Activated naive CD4-positive, alpha-beta T cell treated with anti-CD3 and anti-CD28 coated beads for 36 hours (primary cell): ENCODE measurements at regions of chr11 and their contacts with region 1.

Region 1: DNA sequence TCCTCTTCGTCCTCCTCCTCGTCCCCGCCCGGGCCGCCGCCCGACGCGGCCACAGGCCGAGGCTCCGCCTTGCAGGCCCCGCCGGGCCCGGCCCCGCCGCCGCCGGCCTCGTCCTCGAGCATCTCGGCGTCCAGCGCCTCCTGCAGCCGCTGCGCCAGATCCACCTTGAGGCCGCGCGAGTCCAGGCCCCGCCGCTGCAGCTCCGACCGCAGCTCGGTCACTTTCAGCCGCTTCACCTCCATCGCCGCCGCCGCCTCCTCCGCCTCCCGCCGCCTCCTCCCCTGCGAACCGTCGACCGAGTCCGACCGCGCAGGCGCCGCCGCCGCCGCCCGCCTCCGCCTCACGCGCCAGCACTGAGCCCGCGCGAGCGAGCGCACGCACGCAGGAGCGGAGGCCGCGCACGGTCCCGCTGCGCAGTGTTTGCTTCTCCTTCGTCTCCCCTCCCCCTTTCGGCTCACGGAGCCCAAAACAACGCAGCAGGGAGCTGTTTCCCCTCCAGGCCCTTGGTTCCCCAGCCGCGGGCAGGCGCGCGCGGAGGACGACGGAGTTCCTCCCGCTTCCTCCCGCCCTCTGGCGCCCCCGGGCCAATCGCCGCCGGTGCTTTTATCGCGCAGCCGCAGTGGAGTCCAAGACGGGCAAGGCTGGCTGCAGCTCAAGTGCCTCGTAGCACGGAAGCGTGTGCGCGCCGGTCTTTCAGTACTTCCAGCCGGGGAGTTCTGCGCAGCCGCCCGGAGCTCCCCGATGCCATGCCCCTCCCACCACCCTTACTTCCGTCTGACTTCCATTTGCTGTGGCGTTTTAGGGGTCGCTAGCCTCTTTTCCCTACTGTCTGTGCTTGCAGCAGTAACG is at the start of gene HNRNPUL2:
- DNase-seq: peak; percentile 99
- H3K4me3 Mint-ChIP-seq: peak within 1 kb of the TSS; percentile 90
- H3K27ac Mint-ChIP-seq: peak within 1 kb of the TSS; percentile 99
- H3K4me1 Mint-ChIP-seq: peaks cover 46% of the 10 kb centered on the region
- H3K27me3 Mint-ChIP-seq: no peaks in the 10 kb centered on the region
- total RNA-seq, gene HNRNPUL2: 58.6 to 61.5 TPM

Region 2: DNA sequence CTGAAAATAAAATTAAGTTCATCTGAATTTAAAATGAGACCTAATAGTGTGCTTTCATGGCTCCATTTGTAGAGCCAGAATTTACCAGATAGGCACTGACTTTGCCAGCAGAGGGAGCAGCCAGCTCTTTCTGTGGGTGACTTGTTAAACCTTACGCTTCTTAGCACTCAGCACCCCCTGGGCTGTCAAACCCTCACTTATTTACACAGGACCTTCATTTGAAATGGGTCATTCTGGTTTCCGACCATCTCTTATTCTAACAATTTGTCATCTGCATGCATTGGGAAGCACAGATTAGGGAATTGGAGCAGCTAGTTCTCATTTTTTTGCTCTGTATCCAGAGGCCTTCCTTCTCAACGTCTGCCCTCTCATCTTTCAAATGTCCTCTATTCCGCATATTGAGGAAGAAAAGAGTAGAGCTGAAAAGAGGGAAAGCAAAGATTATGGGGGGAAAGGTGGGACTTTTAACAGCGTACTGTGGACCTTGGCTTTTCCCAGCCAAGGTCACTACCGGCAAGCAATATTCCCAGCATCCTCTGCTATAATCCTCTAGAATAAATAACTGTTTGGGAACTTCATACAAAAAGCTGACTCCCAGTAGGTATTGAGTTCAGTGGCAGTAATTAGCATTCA is 386.8 kb before region 1 on chr11:
- CTCF ChIA-PET with region 1: no interaction called
- intact Hi-C with region 1: no loop called
- DNase-seq: peak; percentile 83
- H3K4me3 Mint-ChIP-seq: no peak overlapping the region
- H3K27ac Mint-ChIP-seq: no peak overlapping the region
- H3K4me1 Mint-ChIP-seq: peaks cover 9% of the 10 kb centered on the region
- H3K27me3 Mint-ChIP-seq: peaks cover 7% of the 10 kb centered on the region

Region 3: DNA sequence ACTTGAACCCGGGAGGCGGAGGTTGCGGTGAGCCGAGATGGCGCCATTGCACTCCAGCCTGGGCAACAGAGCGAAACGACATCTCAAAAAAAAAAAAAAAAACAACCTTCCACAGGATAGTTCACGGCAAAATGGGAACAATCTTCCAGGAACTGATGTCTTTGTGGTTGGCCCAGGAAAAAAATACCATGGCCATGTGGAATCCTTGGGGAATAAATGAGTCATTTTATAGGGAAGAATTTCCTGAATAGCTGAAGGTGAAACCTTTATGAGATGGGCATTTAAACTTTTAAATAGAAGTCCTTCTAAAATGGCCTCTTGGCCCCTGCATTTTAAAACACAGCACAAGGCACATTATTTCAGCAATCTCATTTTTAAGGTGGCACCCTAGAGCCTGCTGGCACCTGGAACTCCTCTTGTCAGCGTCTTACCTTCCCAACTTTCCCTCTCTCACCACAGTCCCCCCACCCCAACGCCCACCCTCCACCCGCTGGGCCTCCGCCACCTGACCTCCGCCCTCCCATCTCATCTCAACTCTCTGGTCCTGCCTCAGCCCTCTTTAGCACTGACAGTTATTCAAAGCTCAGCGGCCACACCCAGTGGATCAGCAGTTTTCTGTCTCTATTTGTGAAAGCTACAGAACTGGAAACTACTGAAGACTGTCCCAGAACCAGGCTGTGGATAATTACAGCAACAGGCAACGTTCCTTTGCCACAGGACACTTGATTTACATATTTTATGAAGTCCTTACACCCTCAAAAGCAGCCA is 265.2 kb before region 1 on chr11:
- CTCF ChIA-PET with region 1: no interaction called
- intact Hi-C with region 1: no loop called
- DNase-seq: no peak
- H3K4me3 Mint-ChIP-seq: no peak overlapping the region
- H3K27ac Mint-ChIP-seq: no peak overlapping the region
- H3K4me1 Mint-ChIP-seq: no peaks in the 10 kb centered on the region
- H3K27me3 Mint-ChIP-seq: no peaks in the 10 kb centered on the region

Region 4: GRCh38 chr11:62601394-62602140 is 125.6 kb before region 1 on chr11 and contains the start of gene MTA2:
- CTCF ChIA-PET with region 1: no interaction called
- intact Hi-C with region 1: loop called (anchors 1 kb)
- DNase-seq: peak; percentile 99
- H3K4me3 Mint-ChIP-seq: peak within 1 kb of the TSS; percentile 91
- H3K27ac Mint-ChIP-seq: peak within 1 kb of the TSS; percentile 99
- H3K4me1 Mint-ChIP-seq: peaks cover 45% of the 10 kb centered on the region
- H3K27me3 Mint-ChIP-seq: no peaks in the 10 kb centered on the region
- total RNA-seq, gene MTA2: 191 to 197 TPM

Region 5: DNA sequence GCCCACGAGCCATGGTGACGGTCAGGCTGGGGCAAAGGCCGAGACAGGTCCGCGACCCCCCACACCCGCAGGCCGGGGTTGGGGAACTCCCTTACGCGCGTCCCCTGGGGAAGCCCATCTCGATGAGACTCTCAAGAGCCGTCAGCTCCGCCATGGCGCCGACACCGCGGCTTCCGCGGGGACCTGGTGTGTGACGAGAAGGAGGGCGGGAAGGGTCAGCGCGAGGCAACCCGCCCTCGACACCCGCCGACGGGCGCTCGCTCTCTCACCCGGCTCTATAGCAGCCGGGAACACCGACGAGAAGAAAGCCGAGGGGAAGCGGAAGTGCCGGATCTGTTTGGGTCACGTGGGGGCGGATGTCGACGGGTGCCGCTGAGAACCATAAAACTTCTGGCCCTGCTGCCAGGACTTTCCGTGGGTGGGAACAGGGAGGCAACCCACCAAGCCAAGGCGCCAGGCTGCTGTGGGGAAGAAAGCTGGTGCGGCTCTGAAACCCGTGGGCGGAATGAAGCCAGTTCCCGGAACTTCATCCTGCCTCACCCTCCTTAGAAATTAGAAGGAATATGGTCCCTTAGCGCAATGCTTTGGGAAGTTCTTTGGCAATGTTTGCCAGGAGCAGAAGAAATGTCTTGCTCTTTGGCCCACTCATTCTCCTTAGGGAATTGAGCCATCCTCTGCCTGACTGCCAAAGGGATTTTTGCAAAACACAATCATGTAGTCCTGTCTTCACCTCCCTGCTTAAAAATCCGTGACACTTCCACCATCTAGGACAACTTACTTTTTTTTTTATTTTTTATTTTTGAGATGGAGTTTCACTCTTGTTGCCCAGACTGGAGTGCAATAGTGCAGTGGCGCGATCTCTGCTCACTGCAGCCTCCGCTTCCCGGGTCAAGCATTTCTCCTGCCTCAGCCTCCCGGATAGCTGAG is 48.1 kb before region 1 on chr11 and contains the start of gene UBXN1:
- CTCF ChIA-PET with region 1: interaction called, 3 read pairs
- intact Hi-C with region 1: loop called (anchors 2 kb)
- DNase-seq: peak; percentile 91
- H3K4me3 Mint-ChIP-seq: peak within 1 kb of the TSS; percentile 87
- H3K27ac Mint-ChIP-seq: peak within 1 kb of the TSS; percentile 94
- H3K4me1 Mint-ChIP-seq: peaks cover 32% of the 10 kb centered on the region
- H3K27me3 Mint-ChIP-seq: no peaks in the 10 kb centered on the region
- total RNA-seq, gene UBXN1: 121 to 124 TPM

Region 6: DNA sequence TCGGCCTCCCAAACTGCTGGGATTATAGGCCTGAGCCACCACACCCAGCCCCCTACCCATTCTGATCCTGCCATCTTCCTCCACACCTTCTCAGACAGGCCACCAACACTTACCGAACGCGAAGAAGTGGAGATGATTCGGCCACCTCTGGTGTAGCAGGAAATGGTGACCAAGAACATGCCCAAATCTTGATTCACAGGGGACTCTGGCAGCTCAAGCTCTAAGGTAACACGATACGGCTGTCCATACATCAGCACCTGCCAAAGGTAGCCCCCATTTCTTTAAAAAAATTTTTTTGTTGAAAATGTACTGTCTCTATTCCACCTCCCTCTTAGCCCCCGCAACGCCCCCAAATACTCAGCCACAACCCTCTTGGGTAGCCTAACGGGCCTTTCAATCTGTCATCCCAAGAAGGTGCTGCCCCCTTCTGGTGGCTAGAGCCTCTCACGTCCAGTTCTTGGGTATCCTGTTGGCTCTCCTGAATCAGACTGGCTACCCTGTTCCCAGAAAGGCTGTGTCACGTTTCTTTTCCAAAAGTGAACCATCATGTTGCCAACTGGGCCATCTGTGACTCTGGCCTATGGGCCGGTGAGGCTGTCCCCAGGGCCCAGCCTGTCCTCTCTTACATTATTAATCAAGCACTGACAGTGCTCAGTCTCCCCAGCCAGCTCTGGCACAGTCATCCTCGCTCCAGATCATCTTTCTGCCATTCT is 32.5 kb before region 1 on chr11:
- CTCF ChIA-PET with region 1: no interaction called
- intact Hi-C with region 1: no loop called
- DNase-seq: peak; percentile 85
- H3K4me3 Mint-ChIP-seq: no peak overlapping the region
- H3K27ac Mint-ChIP-seq: peak overlapping the region; percentile 4
- H3K4me1 Mint-ChIP-seq: no peaks in the 10 kb centered on the region
- H3K27me3 Mint-ChIP-seq: no peaks in the 10 kb centered on the region

Region 7: DNA sequence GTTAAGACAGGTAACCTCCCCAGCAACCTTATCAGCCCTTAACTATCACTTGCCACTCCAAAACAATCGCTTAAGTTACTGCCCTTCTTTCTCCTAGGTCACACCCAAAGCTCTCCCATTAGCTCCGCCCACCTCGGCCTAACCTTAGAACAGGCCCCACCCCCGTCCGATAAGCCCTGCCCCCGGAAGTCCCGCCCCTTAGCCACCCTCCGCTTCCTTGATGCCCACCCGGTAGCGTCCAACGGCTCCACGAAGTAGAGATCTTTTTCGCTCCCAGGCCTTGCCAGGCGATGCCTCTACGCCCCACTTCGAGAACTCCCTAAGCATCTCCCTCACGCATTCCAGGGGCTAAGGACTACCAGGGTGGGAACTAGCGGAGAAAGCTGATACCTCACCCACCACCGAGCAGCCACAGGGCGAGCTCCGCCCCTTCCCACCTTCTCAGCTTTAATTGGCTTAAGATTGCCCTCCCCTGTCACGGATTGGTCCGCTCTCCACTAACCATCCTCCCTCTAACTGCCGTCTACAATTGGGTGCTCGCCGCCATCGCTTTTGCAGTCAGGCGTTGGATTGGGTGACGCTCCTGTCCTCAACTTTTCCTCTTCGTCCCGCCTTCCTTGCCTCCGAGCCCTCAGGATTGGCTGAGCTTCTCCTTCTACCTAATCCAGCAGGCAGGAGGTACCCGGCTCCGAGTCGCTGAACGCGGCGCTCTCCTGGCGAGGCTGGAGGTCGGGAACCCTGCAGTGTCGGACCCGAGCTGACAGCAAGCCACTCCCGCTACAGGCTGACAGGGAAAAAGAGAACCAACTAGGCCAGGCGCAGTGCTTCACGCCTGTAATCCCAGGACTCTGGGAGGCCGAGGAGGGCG is 26.8 kb after region 1 on chr11 and contains the start of gene ZBTB3:
- CTCF ChIA-PET with region 1: interaction called, 4 read pairs
- intact Hi-C with region 1: loop called (anchors 1 kb)
- DNase-seq: peak; percentile 99
- H3K4me3 Mint-ChIP-seq: peak within 1 kb of the TSS; percentile 98
- H3K27ac Mint-ChIP-seq: peak within 1 kb of the TSS; percentile 96
- H3K4me1 Mint-ChIP-seq: peaks cover 34% of the 10 kb centered on the region
- H3K27me3 Mint-ChIP-seq: no peaks in the 10 kb centered on the region
- total RNA-seq, gene ZBTB3: 12.1 to 13.5 TPM

Region 8: GRCh38 chr11:62805076-62805892 is 78.1 kb after region 1 on chr11 and contains the start of gene NXF1:
- CTCF ChIA-PET with region 1: no interaction called
- intact Hi-C with region 1: loop called (anchors 1 kb)
- DNase-seq: peak; percentile 93
- H3K4me3 Mint-ChIP-seq: peak within 1 kb of the TSS; percentile 95
- H3K27ac Mint-ChIP-seq: peak within 1 kb of the TSS; percentile 94
- H3K4me1 Mint-ChIP-seq: peaks cover 28% of the 10 kb centered on the region
- H3K27me3 Mint-ChIP-seq: no peaks in the 10 kb centered on the region
- total RNA-seq, gene NXF1: 44.6 to 46.0 TPM

Region 9: DNA sequence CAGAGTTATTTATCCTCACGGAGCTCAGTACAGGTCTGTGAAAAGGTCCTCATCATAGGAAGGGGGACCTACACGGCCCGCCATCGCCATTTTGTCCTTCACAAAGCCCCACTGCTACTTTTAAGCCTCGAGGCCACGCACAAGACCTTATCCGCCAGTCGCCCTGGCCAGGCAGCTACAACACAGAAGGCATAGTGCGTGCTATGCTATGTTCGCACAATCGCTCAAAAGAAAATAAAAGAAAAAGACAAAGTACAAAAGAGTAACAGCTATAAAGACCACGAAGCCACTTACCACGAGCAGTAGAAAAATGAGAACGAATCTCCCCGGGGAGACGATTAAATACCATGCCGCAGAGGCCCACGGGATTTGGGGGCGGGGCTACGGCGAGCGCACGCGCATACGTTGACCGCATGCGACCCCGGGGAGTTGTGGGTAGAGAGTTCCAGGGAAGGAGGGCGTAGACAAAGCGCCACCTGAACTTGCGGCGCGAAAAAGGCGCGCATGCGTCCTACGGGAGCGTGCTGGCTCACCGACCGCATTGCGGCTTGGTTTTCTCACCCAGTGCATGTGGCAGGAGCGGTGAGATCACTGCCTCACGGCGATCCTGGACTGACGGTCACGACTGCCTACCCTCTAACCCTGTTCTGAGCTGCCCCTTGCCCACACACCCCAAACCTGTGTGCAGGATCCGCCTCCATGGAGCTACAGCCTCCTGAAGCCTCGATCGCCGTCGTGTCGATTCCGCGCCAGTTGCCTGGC is 128.6 kb after region 1 on chr11:
- CTCF ChIA-PET with region 1: interaction called, 3 read pairs
- intact Hi-C with region 1: loop called (anchors 1 kb)
- DNase-seq: peak; percentile 98
- H3K4me3 Mint-ChIP-seq: peak overlapping the region; percentile 99
- H3K27ac Mint-ChIP-seq: peak overlapping the region; percentile 96
- H3K4me1 Mint-ChIP-seq: peaks cover 53% of the 10 kb centered on the region
- H3K27me3 Mint-ChIP-seq: no peaks in the 10 kb centered on the region

Region 10: GRCh38 chr11:62874851-62875250 is 147.7 kb after region 1 on chr11:
- CTCF ChIA-PET with region 1: no interaction called
- intact Hi-C with region 1: no loop called
- DNase-seq: no peak
- H3K4me3 Mint-ChIP-seq: no peak overlapping the region
- H3K27ac Mint-ChIP-seq: no peak overlapping the region
- H3K4me1 Mint-ChIP-seq: peaks cover 10% of the 10 kb centered on the region
- H3K27me3 Mint-ChIP-seq: no peaks in the 10 kb centered on the region